PC-9 (cell line): ENCODE measurements at regions of chr3 and their contacts with region 1.

Region 1: GRCh38 chr3:43998836-43999727 is 242.6 kb upstream of the TOPAZ1 start:
- DNase-seq: peak; percentile 69 to 90
- H3K4me3 ChIP-seq: peak overlapping the region; percentile 70
- H3K27ac ChIP-seq: peak overlapping the region; percentile 88
- H3K4me1 ChIP-seq: peaks cover 22% of the 10 kb centered on the region
- H3K27me3 ChIP-seq: no peaks in the 10 kb centered on the region
- CTCF ChIP-seq: no peak

Region 2: DNA sequence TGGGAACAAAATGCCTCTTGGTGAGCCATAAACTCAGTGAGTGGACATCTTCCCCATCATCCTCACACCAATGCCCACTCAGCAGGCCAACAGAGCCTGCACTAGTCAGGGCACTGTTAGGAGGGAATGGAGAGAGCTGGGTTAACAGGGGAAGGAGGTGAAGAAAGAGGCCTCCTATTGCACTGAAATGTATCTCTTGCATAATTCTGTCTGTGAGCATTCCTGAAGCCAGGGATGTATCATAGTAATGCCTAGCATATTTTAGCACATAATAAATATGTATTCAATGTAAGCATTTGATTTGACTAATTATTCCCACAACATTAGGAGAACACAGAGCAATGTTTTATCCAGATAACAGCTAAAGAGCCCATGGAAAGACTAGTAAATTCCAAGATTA is 458.5 kb before region 1 on chr3:
- CTCF ChIA-PET with region 1: no interaction called
- POLR2A ChIA-PET with region 1: no interaction called
- intact Hi-C with region 1: loop called (anchors 5 kb)
- DNase-seq: no peak
- H3K4me3 ChIP-seq: no peak overlapping the region
- H3K27ac ChIP-seq: no peak overlapping the region
- H3K4me1 ChIP-seq: no peaks in the 10 kb centered on the region
- H3K27me3 ChIP-seq: no peaks in the 10 kb centered on the region
- CTCF ChIP-seq: no peak

Region 3: DNA sequence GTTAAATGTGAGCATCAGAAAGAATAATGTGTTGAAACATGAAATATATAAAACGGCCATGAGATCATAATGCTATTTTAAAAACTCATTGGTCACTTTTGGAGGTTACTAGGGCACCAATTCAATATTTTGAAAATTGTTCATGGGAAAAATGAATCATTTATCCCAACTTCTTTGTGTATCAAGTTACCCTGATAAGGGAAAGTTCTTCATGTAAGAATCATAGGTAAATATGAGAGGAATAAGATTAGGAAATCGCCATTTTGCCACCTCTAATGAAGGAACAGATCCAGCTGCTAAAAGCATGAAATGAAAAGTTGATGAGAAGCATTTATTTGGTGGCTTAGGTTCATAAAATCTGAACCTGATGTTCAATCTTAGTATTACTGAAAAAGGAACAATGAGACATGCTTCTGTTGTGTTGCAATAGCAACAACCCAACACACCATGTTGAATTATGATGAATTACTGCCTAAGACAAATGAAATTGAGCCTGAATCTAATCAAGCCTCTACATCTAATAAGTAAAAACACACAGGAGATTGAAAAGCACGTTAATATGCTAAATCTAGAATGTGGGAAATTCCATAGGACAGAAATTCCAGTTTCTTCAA is 275.9 kb before region 1 on chr3:
- CTCF ChIA-PET with region 1: no interaction called
- POLR2A ChIA-PET with region 1: no interaction called
- intact Hi-C with region 1: no loop called
- DNase-seq: peak in 1 of 2 experiments; percentile 84
- H3K4me3 ChIP-seq: no peak overlapping the region
- H3K27ac ChIP-seq: peak overlapping the region; percentile 59
- H3K4me1 ChIP-seq: peaks cover 14% of the 10 kb centered on the region
- H3K27me3 ChIP-seq: no peaks in the 10 kb centered on the region
- CTCF ChIP-seq: no peak

Region 4: DNA sequence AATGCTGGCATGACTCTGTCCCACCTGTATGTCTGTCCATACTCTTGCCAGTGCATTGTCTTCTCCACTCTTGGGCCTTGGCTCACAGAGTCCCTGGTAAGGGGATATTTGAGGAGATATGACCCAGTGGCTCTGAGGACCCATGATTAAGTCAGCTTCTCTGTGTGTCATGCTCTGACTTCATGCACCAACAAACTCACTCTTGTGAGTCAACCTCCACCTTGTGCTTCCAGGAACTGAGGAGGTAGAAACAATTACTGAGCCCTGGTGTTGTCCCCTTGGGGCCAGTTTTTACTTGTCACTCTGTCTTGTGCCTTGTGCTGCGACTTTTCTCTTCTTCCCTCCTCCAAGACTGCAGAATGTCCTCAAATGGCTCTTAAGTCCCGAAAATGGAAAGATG is 181.3 kb before region 1 on chr3:
- CTCF ChIA-PET with region 1: no interaction called
- POLR2A ChIA-PET with region 1: no interaction called
- intact Hi-C with region 1: no loop called
- DNase-seq: no peak
- H3K4me3 ChIP-seq: no peak overlapping the region
- H3K27ac ChIP-seq: no peak overlapping the region
- H3K4me1 ChIP-seq: no peaks in the 10 kb centered on the region
- H3K27me3 ChIP-seq: no peaks in the 10 kb centered on the region
- CTCF ChIP-seq: no peak

Region 5: DNA sequence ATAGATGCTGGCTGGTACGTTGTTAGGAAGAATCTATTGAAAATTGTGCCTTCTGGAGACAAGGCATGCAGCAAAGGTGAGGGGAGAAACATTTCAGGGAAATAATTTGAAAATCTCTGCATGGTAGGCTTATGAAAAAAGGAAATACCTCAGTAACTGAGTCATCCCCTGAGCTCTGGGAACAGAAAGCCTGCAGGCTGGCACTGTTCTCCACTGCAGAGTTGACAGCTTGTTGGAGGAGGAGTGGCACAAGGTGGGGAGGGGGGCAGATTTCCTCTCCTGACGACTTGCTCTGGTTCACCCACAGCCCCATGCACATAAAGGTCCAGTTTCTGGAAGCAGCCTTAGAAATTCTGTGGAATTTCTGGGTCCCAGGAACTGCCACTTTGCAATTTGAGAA is 129.0 kb before region 1 on chr3:
- CTCF ChIA-PET with region 1: interaction called, 8 read pairs
- POLR2A ChIA-PET with region 1: interaction called, 25 read pairs
- intact Hi-C with region 1: loop called (anchors 2 kb)
- DNase-seq: peak; percentile 64 to 89
- H3K4me3 ChIP-seq: peak overlapping the region; percentile 32; the same call in 1 of the 2 replicates
- H3K27ac ChIP-seq: peak overlapping the region; percentile 97
- H3K4me1 ChIP-seq: peaks cover 97% of the 10 kb centered on the region
- H3K27me3 ChIP-seq: no peaks in the 10 kb centered on the region
- CTCF ChIP-seq: no peak

Region 6: GRCh38 chr3:44047806-44048562 is 48.9 kb after region 1 on chr3:
- CTCF ChIA-PET with region 1: no interaction called
- POLR2A ChIA-PET with region 1: no interaction called
- intact Hi-C with region 1: loop called (anchors 2 kb)
- DNase-seq: peak; percentile 61 to 91
- H3K4me3 ChIP-seq: no peak overlapping the region; the same call in 1 of the 2 replicates
- H3K27ac ChIP-seq: peak overlapping the region; percentile 67
- H3K4me1 ChIP-seq: peaks cover 48% of the 10 kb centered on the region
- H3K27me3 ChIP-seq: no peaks in the 10 kb centered on the region
- CTCF ChIP-seq: no peak

Region 7: DNA sequence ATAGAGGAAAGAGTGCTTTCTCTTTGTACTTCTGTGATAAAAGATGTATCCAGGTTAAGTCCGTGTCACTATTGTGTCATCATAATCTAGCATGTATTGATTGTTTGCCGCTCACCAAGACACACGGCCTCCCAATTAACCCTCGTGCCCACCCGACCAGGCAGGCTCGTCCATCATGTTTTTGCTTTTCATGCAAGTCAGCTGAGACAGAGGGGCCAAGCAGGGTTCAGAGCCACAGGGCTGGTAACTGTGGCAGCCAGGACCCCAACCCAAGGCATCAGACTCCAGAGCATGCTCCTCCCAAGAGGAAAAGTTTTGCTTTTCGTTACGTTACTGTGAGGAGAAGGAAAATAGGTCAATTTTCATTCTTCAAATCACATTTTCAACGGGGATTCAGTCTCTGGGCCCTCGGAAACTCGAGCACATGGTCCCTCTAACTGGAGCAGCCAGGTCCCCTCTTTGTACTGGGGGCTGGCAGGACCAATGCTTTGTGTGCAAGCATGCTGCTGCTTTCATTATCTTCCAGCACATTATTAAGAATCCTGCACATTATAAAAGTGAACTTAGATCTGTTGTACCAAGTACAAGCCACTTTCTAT is 81.5 kb after region 1 on chr3:
- CTCF ChIA-PET with region 1: no interaction called
- POLR2A ChIA-PET with region 1: no interaction called
- intact Hi-C with region 1: no loop called
- DNase-seq: no peak
- H3K4me3 ChIP-seq: no peak overlapping the region
- H3K27ac ChIP-seq: no peak overlapping the region
- H3K4me1 ChIP-seq: no peaks in the 10 kb centered on the region
- H3K27me3 ChIP-seq: no peaks in the 10 kb centered on the region
- CTCF ChIP-seq: no peak

Region 8: GRCh38 chr3:44111482-44111881 is 112.4 kb after region 1 on chr3:
- CTCF ChIA-PET with region 1: no interaction called
- POLR2A ChIA-PET with region 1: no interaction called
- intact Hi-C with region 1: no loop called
- DNase-seq: no peak
- H3K4me3 ChIP-seq: no peak overlapping the region
- H3K27ac ChIP-seq: no peak overlapping the region
- H3K4me1 ChIP-seq: no peaks in the 10 kb centered on the region
- H3K27me3 ChIP-seq: no peaks in the 10 kb centered on the region
- CTCF ChIP-seq: no peak

Region 9: DNA sequence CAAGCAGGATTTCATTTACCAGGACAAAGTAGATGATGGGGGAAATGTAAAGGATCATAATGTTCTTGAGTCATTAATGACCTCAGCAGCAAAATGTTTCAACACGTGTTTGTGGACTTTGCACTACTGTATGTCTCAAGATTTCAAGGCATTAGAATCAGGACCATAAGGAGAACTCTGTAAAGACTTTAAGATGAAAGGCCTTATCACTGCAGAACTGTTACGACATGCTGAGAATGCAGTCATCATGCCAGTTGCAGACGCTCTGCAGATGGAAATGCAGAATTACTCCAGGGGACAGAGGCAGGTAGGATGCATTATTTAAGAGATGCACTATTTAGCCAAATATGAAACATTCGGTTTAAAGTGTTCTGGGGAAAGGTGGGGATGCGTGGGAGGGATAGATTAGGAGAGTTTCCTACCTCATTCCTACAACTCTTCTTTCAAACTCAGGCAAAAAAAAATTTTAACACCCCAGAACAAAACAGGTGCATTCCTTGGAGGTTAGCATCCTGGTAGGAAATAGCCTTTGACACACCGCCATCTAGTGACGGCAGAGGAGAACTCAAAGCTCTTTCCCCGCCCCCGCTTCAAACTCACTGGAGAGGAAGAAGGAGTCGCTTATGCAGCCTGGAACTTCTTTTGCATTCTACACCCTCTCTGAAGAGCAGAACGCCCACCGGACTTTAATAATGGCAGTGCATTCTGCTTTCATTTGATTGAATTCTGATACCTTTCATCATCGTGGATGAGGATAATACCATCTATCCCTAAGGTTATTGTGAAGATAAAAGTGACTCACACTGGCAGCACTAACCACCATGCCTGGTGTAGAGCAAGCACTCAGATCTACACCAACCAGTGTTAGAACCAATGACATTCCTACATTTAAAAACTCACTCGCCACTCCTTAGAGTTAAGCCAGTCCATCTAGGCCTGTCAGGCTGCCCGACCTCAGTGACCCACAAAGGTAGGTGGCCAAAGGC is 199.5 kb after region 1 on chr3:
- CTCF ChIA-PET with region 1: interaction called, 4 read pairs
- POLR2A ChIA-PET with region 1: no interaction called
- intact Hi-C with region 1: loop called (anchors 1 kb)
- DNase-seq: peak; percentile 59 to 78
- H3K4me3 ChIP-seq: no peak overlapping the region
- H3K27ac ChIP-seq: no peak overlapping the region
- H3K4me1 ChIP-seq: no peaks in the 10 kb centered on the region
- H3K27me3 ChIP-seq: no peaks in the 10 kb centered on the region
- CTCF ChIP-seq: peak; percentile 79